Breast epithelium (tissue), 4 donors: ENCODE measurements at regions of chr3 and their contacts with region 1.

Region 1: GRCh38 chr3:100463002-100463401 is 29.4 kb upstream of the TMEM45A start:
- DNase-seq: no peak
- H3K4me3 ChIP-seq: no peak overlapping the region
- H3K27ac ChIP-seq: no peak overlapping the region
- H3K4me1 ChIP-seq: no peaks in the 10 kb centered on the region
- H3K27me3 ChIP-seq: no peaks in the 10 kb centered on the region
- CTCF ChIP-seq: peak; percentile 29 to 86 (median 76)
- POLR2A ChIP-seq: no peak

Region 2: DNA sequence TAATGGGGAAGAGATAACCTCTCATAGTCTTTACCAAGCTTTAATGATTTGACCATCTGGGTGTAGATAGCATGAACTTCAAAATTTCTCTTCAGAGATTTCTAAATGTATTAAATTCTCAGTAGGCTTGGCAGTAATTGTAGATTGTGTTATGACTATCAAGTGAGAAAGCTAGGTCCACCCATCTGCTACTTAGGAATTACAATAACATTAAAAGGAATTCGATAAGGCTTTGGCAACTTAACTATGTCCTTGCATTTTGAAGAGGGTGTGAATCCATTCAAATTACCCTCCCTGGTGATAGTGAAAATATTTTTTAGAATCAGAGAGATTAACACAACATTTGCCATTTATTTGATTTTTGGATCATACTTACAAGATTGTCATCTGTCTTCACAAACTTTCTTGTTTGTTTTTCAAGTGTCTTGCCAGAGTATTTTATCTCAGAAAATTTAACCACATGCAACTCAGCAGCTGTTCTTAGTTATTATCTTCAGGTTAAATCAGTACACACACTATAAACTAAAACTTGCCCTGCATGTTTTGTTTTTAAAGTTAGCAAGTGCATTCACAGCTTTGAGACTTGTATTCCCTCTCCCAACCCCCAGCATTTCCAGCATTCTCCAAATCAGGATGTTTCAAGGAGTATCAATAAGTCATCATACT is 894.2 kb before region 1 on chr3:
- intact Hi-C with region 1: loop called (anchors 5 kb)
- DNase-seq: no peak
- H3K4me3 ChIP-seq: no peak overlapping the region
- H3K27ac ChIP-seq: no peak overlapping the region
- H3K4me1 ChIP-seq: no peaks in the 10 kb centered on the region
- H3K27me3 ChIP-seq: no peaks in the 10 kb centered on the region
- CTCF ChIP-seq: no peak
- POLR2A ChIP-seq: no peak

Region 3: GRCh38 chr3:100506355-100506754 is 43.4 kb after region 1 on chr3:
- intact Hi-C with region 1: loop called (anchors 2 kb)
- DNase-seq: no peak
- H3K4me3 ChIP-seq: no peak overlapping the region
- H3K27ac ChIP-seq: no peak overlapping the region
- H3K4me1 ChIP-seq: no peaks in the 10 kb centered on the region
- H3K27me3 ChIP-seq: no peaks in the 10 kb centered on the region
- CTCF ChIP-seq: no peak
- POLR2A ChIP-seq: no peak

Region 4: GRCh38 chr3:100590114-100590839 is 127.3 kb after region 1 on chr3:
- intact Hi-C with region 1: loop called (anchors 5 kb)
- DNase-seq: peak in 1 of 2 donors; percentile 49
- H3K4me3 ChIP-seq: no peak overlapping the region
- H3K27ac ChIP-seq: no peak overlapping the region
- H3K4me1 ChIP-seq: no peaks in the 10 kb centered on the region
- H3K27me3 ChIP-seq: no peaks in the 10 kb centered on the region
- CTCF ChIP-seq: peak; percentile 86 to 93 (median 89)
- POLR2A ChIP-seq: no peak